GM10248 (cell line): ENCODE measurements at regions of chr2 and their contacts with region 1.

Region 1: GRCh38 chr2:203612266-203612665 is 77.2 kb upstream of the RAPH1 start:
- DNase-seq: no peak
- CTCF ChIP-seq: no peak

Region 2: GRCh38 chr2:203376173-203376572 is 236.1 kb before region 1 on chr2:
- CTCF ChIA-PET with region 1: no interaction called
- POLR2A ChIA-PET with region 1: no interaction called
- DNase-seq: no peak
- CTCF ChIP-seq: no peak

Region 3: GRCh38 chr2:203562268-203562667 is 50.0 kb before region 1 on chr2:
- CTCF ChIA-PET with region 1: no interaction called
- POLR2A ChIA-PET with region 1: no interaction called
- DNase-seq: no peak
- CTCF ChIP-seq: no peak

Region 4: GRCh38 chr2:203626952-203627681 is 14.9 kb after region 1 on chr2:
- CTCF ChIA-PET with region 1: interaction called, 10 read pairs
- POLR2A ChIA-PET with region 1: no interaction called
- DNase-seq: no peak
- CTCF ChIP-seq: no peak

Region 5: GRCh38 chr2:203637471-203638167 is 25.4 kb after region 1 on chr2:
- CTCF ChIA-PET with region 1: no interaction called
- POLR2A ChIA-PET with region 1: no interaction called
- DNase-seq: no peak
- CTCF ChIP-seq: no peak